ENCODE measurements at regions of chr4 and their contacts with region 1.

Region 1: DNA sequence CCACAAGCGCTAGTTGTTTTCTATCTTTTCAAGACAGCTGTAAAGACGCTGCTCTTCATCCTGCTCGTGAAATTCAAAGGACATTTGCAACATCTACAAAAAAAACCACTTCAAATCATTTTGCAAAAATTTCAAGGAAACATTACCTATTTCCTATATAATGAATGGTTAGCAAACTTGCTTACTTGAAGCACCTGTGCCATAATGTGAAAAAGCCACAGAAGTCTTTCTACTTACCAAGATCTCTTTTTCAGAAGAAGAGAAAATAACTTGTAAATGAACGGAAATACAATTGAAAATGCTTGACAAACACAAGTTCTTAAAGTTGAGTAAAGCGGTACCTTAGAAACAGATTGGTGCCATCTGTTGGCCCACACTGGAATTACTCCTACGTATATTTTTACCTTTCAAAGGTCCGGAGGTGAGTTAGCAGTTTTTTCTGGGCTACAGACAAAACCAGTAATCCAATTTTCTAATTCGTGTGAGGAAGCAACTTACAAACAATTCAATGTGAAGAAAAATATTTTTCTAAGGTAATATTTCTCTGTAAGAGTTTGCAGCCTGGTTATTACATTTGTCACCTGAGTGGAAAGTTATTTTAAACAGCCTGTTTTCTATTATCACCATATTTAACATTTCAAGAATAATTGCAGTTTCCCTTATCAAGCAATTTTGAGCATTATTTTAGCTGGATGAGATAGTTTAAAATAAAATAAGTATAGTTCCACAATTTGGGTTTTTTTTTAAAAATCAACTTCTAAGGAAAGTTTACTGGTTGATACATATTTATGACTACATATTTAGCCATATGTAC is at the start of gene TLR6:
- DNase-seq: peak; percentile 75
- ATAC-seq: peak; percentile 75
- H3K4me3 Mint-ChIP-seq: peak within 1 kb of the TSS; percentile 78
- H3K27ac Mint-ChIP-seq: peak within 1 kb of the TSS; percentile 84
- H3K4me1 Mint-ChIP-seq: peaks cover 24% of the 10 kb centered on the region
- H3K27me3 Mint-ChIP-seq: peaks cover 10% of the 10 kb centered on the region
- total RNA-seq, gene TLR6: 0.77 to 1.3 TPM

Region 2: GRCh38 chr4:38759113-38759789 is 97.5 kb before region 1 on chr4:
- CTCF ChIA-PET with region 1: interaction called, 50 read pairs
- DNase-seq: peak; percentile 71
- ATAC-seq: peak; percentile 69
- H3K4me3 Mint-ChIP-seq: no peak overlapping the region
- H3K27ac Mint-ChIP-seq: no peak overlapping the region
- H3K4me1 Mint-ChIP-seq: peaks cover 5% of the 10 kb centered on the region
- H3K27me3 Mint-ChIP-seq: peaks cover 11% of the 10 kb centered on the region

Region 3: DNA sequence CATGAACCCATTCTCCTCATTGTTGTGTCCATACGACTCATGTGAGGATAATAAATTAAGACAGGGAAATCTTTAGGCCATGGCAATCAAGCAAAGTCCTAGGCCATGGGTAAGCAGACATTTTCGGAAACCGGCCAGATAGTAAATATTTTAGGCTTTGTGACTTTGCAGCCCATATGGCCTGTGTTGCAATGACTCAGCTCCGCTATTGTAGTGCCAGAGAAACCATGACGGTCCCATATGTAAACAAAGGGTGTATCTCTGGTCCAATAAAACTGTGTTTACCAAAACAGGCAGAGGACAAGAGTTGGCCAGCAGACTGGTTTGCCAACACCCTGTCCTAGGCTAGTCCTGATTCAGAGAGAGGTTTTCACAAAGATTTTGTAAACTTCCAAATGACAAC is 15.9 kb after region 1 on chr4:
- CTCF ChIA-PET with region 1: interaction called, 35 read pairs
- DNase-seq: no peak
- ATAC-seq: no peak
- H3K4me3 Mint-ChIP-seq: no peak overlapping the region
- H3K27ac Mint-ChIP-seq: no peak overlapping the region
- H3K4me1 Mint-ChIP-seq: peaks cover 3% of the 10 kb centered on the region
- H3K27me3 Mint-ChIP-seq: peaks cover 49% of the 10 kb centered on the region

Region 4: GRCh38 chr4:38889143-38889542 is 32.4 kb after region 1 on chr4:
- CTCF ChIA-PET with region 1: interaction called, 14 read pairs
- DNase-seq: no peak
- ATAC-seq: peak; percentile 77
- H3K4me3 Mint-ChIP-seq: no peak overlapping the region
- H3K27ac Mint-ChIP-seq: peak overlapping the region; percentile 54
- H3K4me1 Mint-ChIP-seq: peaks cover 14% of the 10 kb centered on the region
- H3K27me3 Mint-ChIP-seq: no peaks in the 10 kb centered on the region

Measured in activated CD8-positive, alpha-beta memory T cell treated with anti-CD3 and anti-CD28 coated beads, Interleukin-2, amount 10 ng/mL, durations not matched to agents 7 days and 5 days (primary cell).